ENCODE measurements at regions of chr1 and their contacts with region 1.

Region 1: DNA sequence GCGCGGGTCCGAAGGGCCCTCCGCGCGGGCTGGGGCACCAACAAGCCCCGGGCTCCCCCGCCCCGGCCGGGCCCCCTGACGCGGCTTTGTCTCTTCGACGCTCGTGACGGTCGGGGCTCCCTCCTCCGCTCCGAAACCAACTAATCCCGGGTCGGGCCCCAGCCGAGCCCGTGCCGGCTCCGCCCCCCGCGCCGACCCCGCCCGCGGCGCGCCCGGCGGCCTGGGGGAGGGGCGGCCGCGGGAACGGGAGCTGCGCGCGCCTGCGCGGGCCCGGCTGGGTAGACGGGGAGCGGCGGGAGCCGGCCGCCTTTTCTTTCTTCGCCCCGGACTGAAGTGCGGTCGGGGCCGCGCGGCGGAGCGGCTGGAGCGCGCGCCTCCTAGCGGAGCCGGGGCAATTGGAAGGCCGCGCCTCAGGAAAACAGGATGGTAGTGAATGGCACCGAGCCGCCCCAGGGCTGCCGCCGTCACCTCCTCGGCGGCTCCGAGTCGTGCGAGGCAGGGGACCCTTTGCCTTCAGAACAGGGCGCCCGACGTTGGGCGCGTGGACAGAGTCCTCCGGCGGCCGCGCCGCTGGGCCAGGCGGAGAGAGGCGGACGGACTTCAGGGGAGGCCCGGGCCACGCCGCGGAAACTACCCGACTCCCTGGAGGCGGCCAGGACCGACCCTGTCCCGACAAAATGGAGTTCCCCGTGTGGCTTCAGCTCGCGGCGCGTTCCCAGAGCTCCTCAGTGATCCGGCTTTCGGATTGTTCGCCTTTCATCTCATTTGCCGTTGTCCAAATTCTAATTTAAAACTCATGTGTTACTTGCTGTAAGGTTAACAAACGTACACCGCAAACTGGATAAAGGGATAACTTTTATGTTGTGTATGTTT is at the start of gene TP53BP2:
- DNase-seq: peak; percentile 93
- ATAC-seq: peak; percentile 85
- H3K4me3 ChIP-seq: peak within 1 kb of the TSS; percentile 83 to 91 (median 84)
- H3K4me3 Mint-ChIP-seq: peak within 1 kb of the TSS; percentile 92
- H3K27ac ChIP-seq: peak within 1 kb of the TSS; percentile 92 to 93
- H3K27ac Mint-ChIP-seq: peak within 1 kb of the TSS; percentile 97
- H3K4me1 ChIP-seq: peaks cover 19 to 22% of the 10 kb centered on the region in 2 donors
- H3K4me1 Mint-ChIP-seq: peaks cover 33% of the 10 kb centered on the region
- H3K27me3 ChIP-seq: no peaks in the 10 kb centered on the region
- H3K27me3 Mint-ChIP-seq: no peaks in the 10 kb centered on the region
- CTCF ChIP-seq: peak; percentile 36
- total RNA-seq, gene TP53BP2: 40.0 and 49.2 TPM in 2 replicates

Region 2: GRCh38 chr1:223712194-223712849 is 133.7 kb before region 1 on chr1 and contains the start of gene CAPN2:
- CTCF ChIA-PET with region 1: no interaction called
- POLR2A ChIA-PET with region 1: no interaction called
- intact Hi-C with region 1: loop called (anchors 1 kb)
- DNase-seq: peak; percentile 73
- ATAC-seq: peak; percentile 72
- H3K4me3 ChIP-seq: peak within 1 kb of the TSS; percentile 23 to 87 (median 67)
- H3K4me3 Mint-ChIP-seq: peak within 1 kb of the TSS; percentile 88
- H3K27ac ChIP-seq: peak within 1 kb of the TSS; percentile 42 to 68
- H3K27ac Mint-ChIP-seq: peak within 1 kb of the TSS; percentile 84
- H3K4me1 ChIP-seq: peaks cover 47 to 53% of the 10 kb centered on the region in 2 donors
- H3K4me1 Mint-ChIP-seq: peaks cover 51% of the 10 kb centered on the region
- H3K27me3 ChIP-seq: no peaks in the 10 kb centered on the region
- H3K27me3 Mint-ChIP-seq: no peaks in the 10 kb centered on the region
- CTCF ChIP-seq: no peak
- total RNA-seq, gene CAPN2: 79.6 and 83.9 TPM in 2 replicates

Region 3: GRCh38 chr1:223819730-223820514 is 26.1 kb before region 1 on chr1:
- CTCF ChIA-PET with region 1: interaction called, 3 read pairs
- POLR2A ChIA-PET with region 1: interaction called, 11 read pairs
- intact Hi-C with region 1: no loop called
- DNase-seq: no peak
- ATAC-seq: no peak
- H3K4me3 ChIP-seq: no peak overlapping the region
- H3K4me3 Mint-ChIP-seq: no peak overlapping the region
- H3K27ac ChIP-seq: no peak overlapping the region
- H3K27ac Mint-ChIP-seq: peak overlapping the region; percentile 12
- H3K4me1 ChIP-seq: peaks cover 16 to 19% of the 10 kb centered on the region in 2 donors
- H3K4me1 Mint-ChIP-seq: peaks cover 29% of the 10 kb centered on the region
- H3K27me3 ChIP-seq: no peaks in the 10 kb centered on the region
- H3K27me3 Mint-ChIP-seq: no peaks in the 10 kb centered on the region
- CTCF ChIP-seq: no peak

Region 4: DNA sequence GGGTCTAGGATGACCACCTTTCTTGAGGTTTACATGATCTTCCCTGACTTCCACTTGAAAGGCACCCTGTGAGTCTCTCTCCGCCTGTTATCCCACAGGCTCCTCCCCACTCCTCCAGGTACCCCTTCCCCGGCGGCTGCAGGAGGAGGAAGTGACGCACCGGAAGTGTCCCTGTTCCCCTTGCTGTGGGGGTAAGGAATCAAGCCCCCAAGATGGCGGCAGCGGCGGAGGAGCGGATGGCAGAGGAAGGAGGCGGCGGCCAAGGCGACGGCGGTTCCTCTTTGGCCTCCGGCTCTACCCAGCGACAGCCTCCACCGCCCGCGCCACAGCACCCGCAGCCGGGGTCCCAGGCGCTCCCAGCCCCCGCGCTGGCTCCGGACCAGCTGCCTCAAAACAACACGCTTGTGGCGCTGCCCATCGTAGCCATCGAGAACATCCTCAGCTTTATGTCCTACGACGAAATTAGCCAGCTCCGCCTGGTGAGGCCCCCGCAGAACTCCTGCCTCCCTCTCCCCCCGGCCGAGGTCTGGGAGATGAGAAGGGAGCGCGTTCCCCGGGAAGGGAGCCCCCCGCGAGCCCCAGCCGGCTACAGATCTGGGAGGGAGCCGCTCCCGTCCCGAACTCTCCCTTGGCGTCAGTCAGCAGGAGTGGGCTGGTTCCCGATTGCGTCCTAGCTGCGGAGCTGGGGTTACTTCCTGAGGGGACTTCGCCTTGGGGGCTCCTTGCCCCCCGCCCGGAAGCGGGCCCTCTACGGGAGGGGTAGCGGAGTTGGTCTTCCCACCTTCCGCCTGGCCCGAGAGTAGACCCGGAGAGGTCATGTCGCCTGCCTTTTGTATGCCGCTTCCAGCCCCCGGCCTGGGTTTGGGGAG is 268.1 kb after region 1 on chr1 and contains the start of gene FBXO28:
- CTCF ChIA-PET with region 1: no interaction called
- POLR2A ChIA-PET with region 1: no interaction called
- intact Hi-C with region 1: loop called (anchors 5 kb)
- DNase-seq: peak; percentile 93
- ATAC-seq: peak; percentile 92
- H3K4me3 ChIP-seq: peak within 1 kb of the TSS; percentile 78 to 92 (median 86)
- H3K4me3 Mint-ChIP-seq: peak within 1 kb of the TSS; percentile 92
- H3K27ac ChIP-seq: peak within 1 kb of the TSS; percentile 96
- H3K27ac Mint-ChIP-seq: peak within 1 kb of the TSS; percentile 95
- H3K4me1 ChIP-seq: peaks cover 20 to 27% of the 10 kb centered on the region in 2 donors
- H3K4me1 Mint-ChIP-seq: peaks cover 30% of the 10 kb centered on the region
- H3K27me3 ChIP-seq: peaks cover 0 to 5% (median 0%) of the 10 kb centered on the region in 4 experiments
- H3K27me3 Mint-ChIP-seq: peaks cover under 1% of the 10 kb centered on the region
- CTCF ChIP-seq: peak; percentile 17
- total RNA-seq, gene FBXO28: 37.0 and 39.7 TPM in 2 replicates

Region 5: GRCh38 chr1:224329842-224330753 is 484.1 kb after region 1 on chr1 and contains the start of gene NVL:
- CTCF ChIA-PET with region 1: no interaction called
- POLR2A ChIA-PET with region 1: no interaction called
- intact Hi-C with region 1: loop called (anchors 10 kb)
- DNase-seq: peak; percentile 92
- ATAC-seq: peak; percentile 86
- H3K4me3 ChIP-seq: peak within 1 kb of the TSS; percentile 61 to 88 (median 81)
- H3K4me3 Mint-ChIP-seq: peak within 1 kb of the TSS; percentile 99
- H3K27ac ChIP-seq: peak within 1 kb of the TSS; percentile 94 to 95
- H3K27ac Mint-ChIP-seq: peak within 1 kb of the TSS; percentile 100
- H3K4me1 ChIP-seq: peaks cover 11 to 25% of the 10 kb centered on the region in 2 donors
- H3K4me1 Mint-ChIP-seq: peaks cover 46% of the 10 kb centered on the region
- H3K27me3 ChIP-seq: no peaks in the 10 kb centered on the region
- H3K27me3 Mint-ChIP-seq: no peaks in the 10 kb centered on the region
- CTCF ChIP-seq: no peak
- total RNA-seq, gene NVL: 45.5 and 47.8 TPM in 2 replicates